GM12878 (cell line): ENCODE measurements at regions of chr17 and their contacts with region 1.

Region 1: GRCh38 chr17:50547035-50547735 is at the start of gene SPATA20:
- DNase-seq: peak; percentile 47
- ATAC-seq: peak; percentile 96
- H3K4me3 ChIP-seq: peak within 1 kb of the TSS; percentile 73
- H3K27ac ChIP-seq: peak within 1 kb of the TSS; percentile 73
- H3K4me1 ChIP-seq: peaks cover 5% of the 10 kb centered on the region
- H3K27me3 ChIP-seq: no peaks in the 10 kb centered on the region
- CTCF ChIP-seq: peak; percentile 98 to 100 (median 100); a peak in 5 of 6 replicates
- EP300 ChIP-seq: no peak
- POLR2A ChIP-seq: peak; percentile 94
- RAD21 ChIP-seq: peak; percentile 93
- polyA plus RNA-seq, gene SPATA20: 2.1 to 3.9 TPM

Region 2: GRCh38 chr17:50626037-50626574 is 78.9 kb after region 1 on chr17:
- CTCF ChIA-PET with region 1: interaction called, 12 read pairs
- POLR2A ChIA-PET with region 1: interaction called, 3 read pairs
- RAD21 ChIA-PET with region 1: interaction called, 11 read pairs
- SMC1A ChIA-PET with region 1: interaction called, 11 read pairs
- in situ Hi-C with region 1: loop called (anchors 5 kb)
- intact Hi-C with region 1: loop called (anchors 1 kb)
- DNase-seq: no peak
- ATAC-seq: peak; percentile 90
- H3K4me3 ChIP-seq: no peak overlapping the region
- H3K27ac ChIP-seq: no peak overlapping the region
- H3K4me1 ChIP-seq: no peaks in the 10 kb centered on the region
- H3K27me3 ChIP-seq: peaks cover 0 to 1% of the 10 kb centered on the region in 2 experiments; a peak in 2 of 4 replicates
- CTCF ChIP-seq: peak; percentile 57 to 83 (median 73)
- EP300 ChIP-seq: no peak
- POLR2A ChIP-seq: no peak
- RAD21 ChIP-seq: peak; percentile 73

Region 3: GRCh38 chr17:50697663-50698274 is 150.6 kb after region 1 on chr17:
- CTCF ChIA-PET with region 1: interaction called, 18 read pairs
- POLR2A ChIA-PET with region 1: no interaction called
- RAD21 ChIA-PET with region 1: interaction called, 6 read pairs
- SMC1A ChIA-PET with region 1: interaction called, 5 read pairs
- in situ Hi-C with region 1: loop called (anchors 5 kb)
- intact Hi-C with region 1: loop called (anchors 1 kb)
- DNase-seq: no peak
- ATAC-seq: no peak
- H3K4me3 ChIP-seq: no peak overlapping the region
- H3K27ac ChIP-seq: no peak overlapping the region
- H3K4me1 ChIP-seq: peaks cover 13% of the 10 kb centered on the region
- H3K27me3 ChIP-seq: no peaks in the 10 kb centered on the region
- CTCF ChIP-seq: no peak; a peak in 1 of 6 replicates
- EP300 ChIP-seq: no peak
- POLR2A ChIP-seq: no peak
- RAD21 ChIP-seq: no peak

Region 4: GRCh38 chr17:50783193-50783660 is 236.0 kb after region 1 on chr17:
- CTCF ChIA-PET with region 1: interaction called, 4 read pairs
- POLR2A ChIA-PET with region 1: no interaction called
- RAD21 ChIA-PET with region 1: no interaction called
- SMC1A ChIA-PET with region 1: no interaction called
- in situ Hi-C with region 1: no loop called
- intact Hi-C with region 1: loop called (anchors 2 kb)
- DNase-seq: peak; percentile 31
- ATAC-seq: peak; percentile 98
- H3K4me3 ChIP-seq: no peak overlapping the region
- H3K27ac ChIP-seq: no peak overlapping the region
- H3K4me1 ChIP-seq: no peaks in the 10 kb centered on the region; the same call in 1 of the 2 replicates
- H3K27me3 ChIP-seq: no peaks in the 10 kb centered on the region
- CTCF ChIP-seq: peak; percentile 99 to 100 (median 99); a peak in 5 of 6 replicates
- EP300 ChIP-seq: no peak
- POLR2A ChIP-seq: no peak
- RAD21 ChIP-seq: peak; percentile 98

Region 5: GRCh38 chr17:50949989-50950881 is 403.1 kb after region 1 on chr17:
- CTCF ChIA-PET with region 1: no interaction called
- POLR2A ChIA-PET with region 1: no interaction called
- RAD21 ChIA-PET with region 1: no interaction called
- SMC1A ChIA-PET with region 1: no interaction called
- in situ Hi-C with region 1: loop called (anchors 10 kb)
- intact Hi-C with region 1: loop called (anchors 10 kb)
- DNase-seq: no peak
- ATAC-seq: peak; percentile 95
- H3K4me3 ChIP-seq: no peak overlapping the region
- H3K27ac ChIP-seq: no peak overlapping the region
- H3K4me1 ChIP-seq: peaks cover 20% of the 10 kb centered on the region
- H3K27me3 ChIP-seq: no peaks in the 10 kb centered on the region
- CTCF ChIP-seq: peak; percentile 66 to 76 (median 66)
- EP300 ChIP-seq: no peak
- POLR2A ChIP-seq: no peak
- RAD21 ChIP-seq: peak; percentile 88